Testis (tissue), 5 donors: ENCODE measurements at regions of chr6 and their contacts with region 1.

Region 1: DNA sequence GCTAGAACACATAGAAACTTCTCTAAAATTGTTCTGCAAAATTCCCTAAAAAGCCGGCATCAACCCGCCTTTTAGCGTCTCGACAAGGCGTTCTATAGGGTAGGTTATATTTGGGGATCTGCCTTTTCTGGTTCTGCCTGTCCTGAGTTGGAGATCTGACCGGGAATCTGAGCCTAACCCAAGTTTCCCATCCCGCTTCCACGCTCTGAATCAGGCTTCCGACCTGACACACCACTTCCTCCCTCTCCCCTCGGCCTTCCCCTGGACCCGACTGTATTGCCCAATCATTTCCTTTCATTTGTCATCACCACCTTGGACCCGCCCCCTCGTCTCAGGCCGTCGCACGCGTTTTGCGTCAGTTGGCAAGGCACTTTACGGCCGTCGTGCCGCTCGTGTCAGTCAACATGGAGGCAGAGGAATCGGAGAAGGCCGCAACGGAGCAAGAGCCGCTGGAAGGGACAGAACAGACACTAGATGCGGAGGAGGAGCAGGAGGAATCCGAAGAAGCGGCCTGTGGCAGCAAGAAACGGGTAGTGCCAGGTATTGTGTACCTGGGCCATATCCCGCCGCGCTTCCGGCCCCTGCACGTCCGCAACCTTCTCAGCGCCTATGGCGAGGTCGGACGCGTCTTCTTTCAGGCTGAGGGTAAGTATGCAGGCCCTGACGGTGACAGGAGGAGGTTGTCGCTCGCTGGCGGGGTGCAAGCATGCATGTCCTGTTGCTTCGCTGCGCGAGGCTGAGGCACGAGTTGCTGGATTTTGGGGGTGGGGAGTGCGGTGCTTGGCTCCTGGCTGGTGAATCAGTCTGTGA is at the start of gene ABT1:
- DNase-seq: peak; percentile 98
- H3K4me3 ChIP-seq: peak within 1 kb of the TSS; percentile 93 to 99
- H3K27ac ChIP-seq: peak within 1 kb of the TSS; percentile 78 to 80
- H3K4me1 ChIP-seq: peaks cover 8% of the 10 kb centered on the region
- H3K27me3 ChIP-seq: no peaks in the 10 kb centered on the region
- CTCF ChIP-seq: peak in 2 of 3 experiments; percentile 31 to 32
- POLR2A ChIP-seq: peak; percentile 47
- total RNA-seq, gene ABT1: 18.9 to 23.6 TPM

Region 2: DNA sequence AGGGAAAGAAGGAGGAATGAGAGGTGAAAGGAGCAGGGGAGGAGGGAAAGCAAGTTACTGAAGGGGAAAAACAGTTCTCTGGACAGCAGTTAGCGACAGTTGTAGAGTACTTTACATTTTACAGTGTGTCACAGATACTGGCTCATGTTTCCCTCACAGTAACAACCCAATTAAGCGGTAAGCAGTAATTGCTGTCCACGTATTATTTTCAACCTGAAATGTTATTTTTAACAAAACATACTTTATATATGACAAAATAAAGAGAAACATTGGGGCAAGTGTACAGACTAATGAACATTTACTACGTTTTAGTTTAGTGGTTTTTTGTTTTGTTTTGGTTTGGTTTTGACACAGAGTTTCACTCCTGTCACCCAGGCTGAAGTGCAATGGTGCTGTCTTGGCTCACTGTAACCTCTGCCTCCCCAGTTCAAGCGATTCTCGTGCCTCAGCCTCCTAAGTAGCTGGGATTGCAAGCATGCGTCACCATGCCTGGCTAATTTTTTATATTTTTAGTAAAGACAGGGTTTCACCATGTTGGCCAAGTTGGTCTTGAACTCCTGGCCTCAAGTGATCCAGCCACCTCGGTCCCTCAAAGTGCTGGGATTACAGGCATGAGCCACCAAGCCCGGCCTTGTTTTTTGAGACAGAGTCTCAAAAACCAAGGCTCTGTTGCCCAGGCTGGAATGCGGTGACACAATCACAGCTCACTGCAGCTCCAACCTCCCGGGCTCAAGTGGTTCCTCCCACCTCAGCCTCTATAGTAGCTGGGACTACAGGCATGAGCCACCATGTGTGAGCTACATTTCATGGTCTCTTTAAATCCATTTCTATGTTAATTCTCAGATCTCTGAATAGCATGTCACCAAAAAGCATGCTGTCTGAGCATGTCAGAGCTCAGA is 254.4 kb before region 1 on chr6:
- intact Hi-C with region 1: loop called (anchors 10 kb)
- DNase-seq: peak; percentile 60
- H3K4me3 ChIP-seq: peak overlapping the region in 1 of 2 donors; percentile 1
- H3K27ac ChIP-seq: no peak overlapping the region
- H3K4me1 ChIP-seq: no peaks in the 10 kb centered on the region
- H3K27me3 ChIP-seq: no peaks in the 10 kb centered on the region
- CTCF ChIP-seq: no peak
- POLR2A ChIP-seq: no peak

Region 3: GRCh38 chr6:26363882-26364701 is 232.7 kb before region 1 on chr6:
- intact Hi-C with region 1: loop called (anchors 5 kb)
- DNase-seq: peak; percentile 62
- H3K4me3 ChIP-seq: peak overlapping the region in 1 of 2 donors; percentile 78
- H3K27ac ChIP-seq: peak overlapping the region; percentile 83 to 90
- H3K4me1 ChIP-seq: peaks cover 10% of the 10 kb centered on the region
- H3K27me3 ChIP-seq: no peaks in the 10 kb centered on the region
- CTCF ChIP-seq: no peak
- POLR2A ChIP-seq: no peak

Region 4: GRCh38 chr6:26473758-26474438 is 122.9 kb before region 1 on chr6:
- intact Hi-C with region 1: no loop called
- DNase-seq: peak; percentile 88
- H3K4me3 ChIP-seq: peak overlapping the region; percentile 32 to 57
- H3K27ac ChIP-seq: peak overlapping the region; percentile 83 to 91
- H3K4me1 ChIP-seq: peaks cover 13% of the 10 kb centered on the region
- H3K27me3 ChIP-seq: no peaks in the 10 kb centered on the region
- CTCF ChIP-seq: no peak
- POLR2A ChIP-seq: no peak

Region 5: DNA sequence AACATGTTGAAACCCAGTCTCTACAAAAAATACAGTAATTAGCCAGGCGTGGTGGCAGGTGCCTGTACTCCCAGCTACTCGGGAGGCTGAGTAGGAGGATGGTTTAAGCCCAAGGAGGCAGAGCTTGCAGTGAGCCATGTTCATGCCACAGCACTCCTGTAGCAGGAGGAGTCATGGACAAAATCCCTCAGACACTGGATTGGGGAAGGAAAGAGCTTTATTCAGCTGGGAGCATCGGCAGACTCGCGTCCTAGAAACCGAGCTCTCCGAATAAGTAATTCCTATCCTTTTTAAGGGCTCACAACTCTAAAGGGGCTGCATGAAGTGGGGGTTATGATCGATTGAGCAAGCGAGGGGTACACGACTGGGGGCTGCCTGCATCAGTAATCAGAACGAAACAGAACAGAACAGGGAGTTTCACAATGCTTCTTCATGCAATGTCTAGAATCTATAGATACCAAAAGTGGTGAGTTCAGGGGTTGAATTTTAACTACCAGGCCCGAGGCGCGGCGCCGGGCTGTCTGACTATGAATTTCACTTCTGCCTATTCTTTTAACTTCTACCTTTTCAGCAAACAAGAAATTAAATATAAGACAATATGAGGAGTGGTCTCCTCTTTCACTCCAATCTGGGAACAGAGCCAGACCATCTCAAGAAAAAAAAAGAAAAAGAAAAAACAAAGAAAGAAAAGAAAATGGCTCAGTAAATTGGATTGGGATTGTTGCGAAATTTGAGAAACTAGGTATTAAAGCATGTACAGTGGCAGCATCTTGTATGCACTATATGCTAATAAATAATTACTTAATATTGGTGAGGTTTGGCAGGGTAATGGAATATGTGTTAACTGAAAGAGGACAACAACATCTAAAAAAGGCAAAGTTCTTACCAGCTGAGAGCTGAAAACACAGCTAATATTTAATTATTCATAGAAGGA is 35.0 kb before region 1 on chr6:
- intact Hi-C with region 1: no loop called
- DNase-seq: no peak
- H3K4me3 ChIP-seq: no peak overlapping the region
- H3K27ac ChIP-seq: no peak overlapping the region
- H3K4me1 ChIP-seq: no peaks in the 10 kb centered on the region
- H3K27me3 ChIP-seq: no peaks in the 10 kb centered on the region
- CTCF ChIP-seq: no peak
- POLR2A ChIP-seq: no peak